Mucosa of descending colon (tissue), 3 donors: ENCODE measurements at regions of chr4 and their contacts with region 1.

Region 1: DNA sequence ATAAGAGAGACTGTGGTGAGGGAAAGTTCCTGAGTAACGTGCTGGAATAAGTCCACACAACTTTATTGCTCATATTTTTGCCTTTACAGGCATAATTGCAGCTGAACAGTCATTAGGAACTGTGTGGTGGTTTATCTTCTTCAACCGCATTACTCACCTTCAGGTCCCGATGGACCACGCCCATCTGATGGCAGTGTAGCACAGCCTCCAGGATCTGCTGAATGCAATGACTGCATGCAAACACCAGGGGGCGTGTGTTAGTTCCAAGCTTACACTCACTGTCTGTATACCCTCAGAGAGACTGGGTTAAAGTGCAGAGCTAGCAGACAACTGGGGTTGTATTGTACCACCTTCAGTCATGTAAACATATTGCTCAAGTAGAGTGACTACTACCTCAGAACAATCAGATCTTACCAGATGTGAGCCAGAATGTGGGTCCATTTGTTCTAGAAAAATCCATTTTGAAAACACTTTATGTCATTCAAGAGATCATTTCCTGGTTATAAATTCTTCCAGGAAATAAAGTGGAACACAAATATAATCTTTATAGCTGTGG is 214.0 kb downstream of the CAMK2D start:
- DNase-seq: peak; percentile 89 to 94 (median 92)
- ATAC-seq: peak; percentile 99
- H3K4me3 ChIP-seq: no peak overlapping the region
- H3K4me1 ChIP-seq: peaks cover 27% of the 10 kb centered on the region
- CTCF ChIP-seq: peak; percentile 96

Region 2: GRCh38 chr4:113761620-113762185 is 214.1 kb after region 1 on chr4 and contains the start of gene CAMK2D:
- intact Hi-C with region 1: loop called (anchors 5 to 10 kb)
- DNase-seq: peak; percentile 89 to 93 (median 93)
- ATAC-seq: peak; percentile 77
- H3K4me3 ChIP-seq: peak within 1 kb of the TSS; percentile 64
- H3K4me1 ChIP-seq: peaks cover 22% of the 10 kb centered on the region
- CTCF ChIP-seq: peak; percentile 24
- total RNA-seq, gene CAMK2D: 59.8 to 83.0 (median 77.3) TPM